MCF 10A (cell line): ENCODE measurements at regions of chr16 and their contacts with region 1.

Region 1: GRCh38 chr16:4936991-4937781 is at the start of gene PPL:
- DNase-seq: peak; percentile 86
- H3K4me3 Mint-ChIP-seq: peak within 1 kb of the TSS; percentile 86
- H3K27ac Mint-ChIP-seq: no peak within 1 kb of the TSS
- H3K4me1 Mint-ChIP-seq: peaks cover 28% of the 10 kb centered on the region
- H3K27me3 Mint-ChIP-seq: no peaks in the 10 kb centered on the region
- CTCF ChIP-seq: no peak
- total RNA-seq, gene PPL: 49.1 and 50.1 TPM in 2 replicates

Region 2: GRCh38 chr16:4882633-4883285 is 54.4 kb before region 1 on chr16:
- CTCF ChIA-PET with region 1: interaction called, 6 read pairs
- POLR2A ChIA-PET with region 1: interaction called, 4 read pairs
- intact Hi-C with region 1: loop called (anchors 10 kb)
- DNase-seq: peak; percentile 94
- H3K4me3 Mint-ChIP-seq: no peak overlapping the region
- H3K27ac Mint-ChIP-seq: no peak overlapping the region
- H3K4me1 Mint-ChIP-seq: peaks cover 31% of the 10 kb centered on the region
- H3K27me3 Mint-ChIP-seq: no peaks in the 10 kb centered on the region
- CTCF ChIP-seq: no peak

Region 3: GRCh38 chr16:4911831-4912417 is 25.3 kb before region 1 on chr16:
- CTCF ChIA-PET with region 1: interaction called, 10 read pairs
- POLR2A ChIA-PET with region 1: interaction called, 23 read pairs
- intact Hi-C with region 1: no loop called
- DNase-seq: no peak
- H3K4me3 Mint-ChIP-seq: peak overlapping the region; percentile 31
- H3K27ac Mint-ChIP-seq: peak overlapping the region; percentile 49
- H3K4me1 Mint-ChIP-seq: peaks cover 13% of the 10 kb centered on the region
- H3K27me3 Mint-ChIP-seq: no peaks in the 10 kb centered on the region
- CTCF ChIP-seq: no peak

Region 4: DNA sequence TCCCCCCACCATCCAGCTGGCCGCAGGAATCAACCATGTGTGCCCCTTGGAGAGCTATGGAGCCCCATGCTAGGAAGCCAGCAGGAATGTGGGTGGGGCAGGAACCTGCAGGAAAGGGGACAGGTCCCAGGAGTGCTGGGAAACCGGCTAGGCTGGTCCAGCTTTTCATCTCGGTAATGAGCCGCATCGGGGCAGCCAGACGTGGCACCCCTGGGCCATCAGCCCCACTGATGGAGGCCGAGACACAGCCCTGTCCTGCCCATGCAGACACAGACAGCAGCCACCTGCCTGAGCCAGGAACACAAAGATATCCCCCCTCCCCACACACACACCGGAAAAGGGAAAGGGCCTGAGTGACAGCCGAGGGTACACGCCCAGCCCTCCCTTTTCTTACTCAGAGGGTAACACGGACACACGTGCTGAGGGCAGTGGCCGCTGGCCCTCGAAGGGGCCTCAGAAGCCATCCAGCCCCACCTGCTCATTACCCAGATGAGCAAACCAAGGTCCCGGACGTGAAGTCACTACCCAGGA is 18.4 kb before region 1 on chr16:
- CTCF ChIA-PET with region 1: interaction called, 10 read pairs
- POLR2A ChIA-PET with region 1: interaction called, 23 read pairs
- intact Hi-C with region 1: no loop called
- DNase-seq: no peak
- H3K4me3 Mint-ChIP-seq: no peak overlapping the region
- H3K27ac Mint-ChIP-seq: no peak overlapping the region
- H3K4me1 Mint-ChIP-seq: peaks cover 24% of the 10 kb centered on the region
- H3K27me3 Mint-ChIP-seq: no peaks in the 10 kb centered on the region
- CTCF ChIP-seq: no peak

Region 5: DNA sequence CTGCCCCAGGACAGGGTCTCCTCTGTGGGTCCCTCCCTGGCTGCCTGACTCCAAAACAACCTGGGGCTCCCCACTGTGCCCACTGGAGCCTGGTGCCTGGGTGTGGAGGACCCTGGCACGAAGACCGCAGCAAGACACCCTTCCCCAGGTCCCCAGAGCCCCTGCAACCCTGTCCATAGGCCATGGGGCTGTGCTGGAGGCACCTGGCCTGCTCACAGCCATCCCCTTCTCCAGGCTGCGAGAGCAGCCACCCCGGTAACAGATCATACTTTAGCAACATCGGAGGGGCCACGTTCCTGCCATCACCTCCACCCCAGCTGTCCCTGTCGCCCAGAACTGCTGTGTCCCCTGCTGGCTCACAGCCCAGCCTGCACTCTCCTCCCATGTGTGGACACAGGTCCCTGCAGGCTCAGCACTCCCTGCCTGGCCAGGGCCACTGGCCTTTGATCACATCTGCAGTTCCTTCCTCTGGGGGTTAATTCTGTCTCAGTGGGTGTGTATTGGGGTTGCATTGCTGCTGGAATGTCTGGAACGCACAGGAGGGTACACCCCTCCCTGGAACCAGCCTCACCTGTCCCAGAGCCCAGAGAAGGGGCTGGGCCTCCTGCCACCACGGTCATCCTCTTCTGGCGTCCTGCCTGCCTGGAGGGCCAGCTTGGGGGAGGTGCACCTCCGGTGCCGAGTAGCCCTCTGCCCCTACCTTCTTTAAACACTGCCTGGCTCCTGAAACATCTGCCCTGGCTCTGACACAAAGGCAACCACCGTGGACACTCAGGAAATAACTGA is 12.4 kb before region 1 on chr16:
- CTCF ChIA-PET with region 1: interaction called, 9 read pairs
- POLR2A ChIA-PET with region 1: interaction called, 21 read pairs
- intact Hi-C with region 1: no loop called
- DNase-seq: peak; percentile 54
- H3K4me3 Mint-ChIP-seq: peak overlapping the region; percentile 63
- H3K27ac Mint-ChIP-seq: peak overlapping the region; percentile 87
- H3K4me1 Mint-ChIP-seq: peaks cover 44% of the 10 kb centered on the region
- H3K27me3 Mint-ChIP-seq: no peaks in the 10 kb centered on the region
- CTCF ChIP-seq: no peak